WTC11 (cell line): ENCODE measurements at regions of chr2 and their contacts with region 1.

Region 1: DNA sequence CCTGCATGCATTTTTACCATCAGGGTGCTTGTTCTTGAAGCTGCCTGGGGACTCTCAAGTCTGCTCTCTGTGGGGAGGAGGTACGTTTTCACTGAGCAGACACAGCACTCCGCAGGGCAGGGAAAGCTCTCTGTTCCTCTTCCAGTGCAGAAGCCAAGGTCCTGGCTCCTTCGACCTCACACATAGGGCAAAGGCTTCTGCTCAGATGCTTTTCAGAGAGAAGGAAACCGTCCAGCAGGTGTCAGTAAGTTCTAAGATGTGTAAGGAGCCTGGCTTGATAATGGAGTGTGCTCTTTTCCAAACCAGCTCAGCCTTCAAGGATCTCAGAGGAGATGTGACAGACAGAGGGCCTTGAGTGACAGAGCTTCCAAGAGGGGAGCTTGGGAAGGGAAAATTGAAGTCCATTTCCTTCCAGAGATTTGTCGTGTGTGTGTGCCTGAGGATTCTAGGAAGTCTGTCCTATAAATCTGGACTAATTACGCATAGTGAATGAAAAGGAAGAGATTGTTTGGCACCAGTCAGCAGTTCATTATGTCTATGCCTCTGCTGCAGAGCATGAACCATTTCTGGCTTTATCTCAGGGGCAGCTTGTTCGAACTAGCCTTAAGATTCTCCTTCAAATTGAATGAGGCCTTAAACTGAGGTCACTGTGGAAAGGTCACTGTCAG is 67.3 kb upstream of the UPP2 start:
- DNase-seq: peak; percentile 31
- ATAC-seq: peak; percentile 99
- H3K4me3 Mint-ChIP-seq: no peak overlapping the region
- H3K27ac Mint-ChIP-seq: no peak overlapping the region
- H3K4me1 Mint-ChIP-seq: peaks cover 2% of the 10 kb centered on the region; the same call in 1 of the 2 replicates
- H3K27me3 Mint-ChIP-seq: no peaks in the 10 kb centered on the region
- CTCF ChIP-seq: 0 out of 2 replicates have a peak, but pooled peaks have one; percentile 19

Region 2: GRCh38 chr2:158045362-158045761 is 11.0 kb after region 1 on chr2:
- CTCF ChIA-PET with region 1: interaction called, 11 read pairs
- POLR2A ChIA-PET with region 1: no interaction called
- DNase-seq: peak; percentile 42
- ATAC-seq: peak; percentile 91
- H3K4me3 Mint-ChIP-seq: no peak overlapping the region
- H3K27ac Mint-ChIP-seq: no peak overlapping the region
- H3K4me1 Mint-ChIP-seq: peaks cover 12% of the 10 kb centered on the region
- H3K27me3 Mint-ChIP-seq: no peaks in the 10 kb centered on the region
- CTCF ChIP-seq: no peak

Region 3: GRCh38 chr2:158174495-158174894 is 140.2 kb after region 1 on chr2:
- CTCF ChIA-PET with region 1: interaction called, 15 read pairs
- POLR2A ChIA-PET with region 1: no interaction called
- DNase-seq: no peak
- ATAC-seq: no peak
- H3K4me3 Mint-ChIP-seq: no peak overlapping the region
- H3K27ac Mint-ChIP-seq: no peak overlapping the region
- H3K4me1 Mint-ChIP-seq: no peaks in the 10 kb centered on the region
- H3K27me3 Mint-ChIP-seq: no peaks in the 10 kb centered on the region
- CTCF ChIP-seq: no peak

Region 4: GRCh38 chr2:158179660-158180059 is 145.3 kb after region 1 on chr2:
- CTCF ChIA-PET with region 1: interaction called, 13 read pairs
- POLR2A ChIA-PET with region 1: no interaction called
- DNase-seq: no peak
- ATAC-seq: peak; percentile 53
- H3K4me3 Mint-ChIP-seq: no peak overlapping the region
- H3K27ac Mint-ChIP-seq: no peak overlapping the region
- H3K4me1 Mint-ChIP-seq: peaks cover 27% of the 10 kb centered on the region
- H3K27me3 Mint-ChIP-seq: peaks cover 4% of the 10 kb centered on the region; the same call in 1 of the 2 replicates
- CTCF ChIP-seq: no peak

Region 5: GRCh38 chr2:158723917-158724690 is 689.8 kb after region 1 on chr2:
- CTCF ChIA-PET with region 1: interaction called, 16 read pairs
- POLR2A ChIA-PET with region 1: no interaction called
- DNase-seq: peak; percentile 55
- ATAC-seq: peak; percentile 92
- H3K4me3 Mint-ChIP-seq: no peak overlapping the region
- H3K27ac Mint-ChIP-seq: peak overlapping the region; percentile 50
- H3K4me1 Mint-ChIP-seq: peaks cover 23% of the 10 kb centered on the region
- H3K27me3 Mint-ChIP-seq: no peaks in the 10 kb centered on the region; the same call in 1 of the 2 replicates
- CTCF ChIP-seq: peak; percentile 39